H1 (cell line): ENCODE measurements at regions of chr1 and their contacts with region 1.

Region 1: DNA sequence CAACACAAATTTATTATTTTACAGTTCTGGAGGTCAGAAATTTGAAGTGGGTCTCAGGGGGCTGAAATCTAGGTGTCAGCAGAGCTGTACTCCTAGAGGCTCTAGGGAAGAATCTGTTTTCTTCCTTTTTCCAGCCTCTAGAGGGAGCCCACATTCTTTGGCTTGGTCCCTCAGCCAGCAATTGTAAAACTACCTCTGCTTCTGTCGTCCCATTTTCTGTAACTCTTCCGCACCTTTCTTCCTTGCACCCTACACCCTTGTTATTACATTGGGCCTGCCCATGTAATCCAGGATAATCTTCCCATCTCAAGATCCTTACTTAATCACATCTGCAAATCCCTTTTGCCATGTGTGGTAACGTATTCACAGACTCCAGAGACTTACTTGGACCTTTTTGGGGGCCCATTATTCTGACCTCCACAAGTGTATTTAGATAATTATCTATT is 24.8 kb upstream of the THEM4 start:
- DNase-seq: no peak
- H3K4me3 ChIP-seq: no peak overlapping the region
- H3K27ac ChIP-seq: no peak overlapping the region
- H3K4me1 ChIP-seq: no peaks in the 10 kb centered on the region
- H3K27me3 ChIP-seq: no peaks in the 10 kb centered on the region
- CTCF ChIP-seq: peak; percentile 16 to 90 (median 78)
- EP300 ChIP-seq: no peak
- POLR2A ChIP-seq: no peak
- RAD21 ChIP-seq: peak; percentile 94

Region 2: DNA sequence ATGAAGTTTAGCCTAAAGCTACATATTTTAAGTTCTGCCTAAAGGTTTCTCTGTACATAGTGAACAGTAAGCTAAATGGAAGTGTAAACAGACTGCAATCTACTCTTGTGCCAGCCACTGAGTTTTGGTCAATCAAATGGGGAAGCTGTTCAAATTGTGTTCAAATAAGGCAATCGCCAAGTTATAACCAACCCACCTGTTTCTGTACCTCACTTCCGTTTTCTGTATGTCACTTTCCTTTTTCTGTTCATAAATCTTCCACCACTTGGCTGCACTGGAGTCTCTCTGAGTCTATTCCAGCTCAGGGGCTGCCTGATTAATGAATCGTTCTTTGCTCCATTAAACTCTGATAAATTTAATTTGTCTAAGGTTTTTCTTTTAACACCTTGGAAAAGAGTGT is 13.9 kb before region 1 on chr1:
- CTCF ChIA-PET with region 1: interaction called, 24 read pairs
- POLR2A ChIA-PET with region 1: no interaction called
- DNase-seq: no peak
- H3K4me3 ChIP-seq: no peak overlapping the region
- H3K27ac ChIP-seq: no peak overlapping the region
- H3K4me1 ChIP-seq: no peaks in the 10 kb centered on the region
- H3K27me3 ChIP-seq: no peaks in the 10 kb centered on the region
- CTCF ChIP-seq: no peak
- EP300 ChIP-seq: no peak
- POLR2A ChIP-seq: no peak
- RAD21 ChIP-seq: no peak

Region 3: DNA sequence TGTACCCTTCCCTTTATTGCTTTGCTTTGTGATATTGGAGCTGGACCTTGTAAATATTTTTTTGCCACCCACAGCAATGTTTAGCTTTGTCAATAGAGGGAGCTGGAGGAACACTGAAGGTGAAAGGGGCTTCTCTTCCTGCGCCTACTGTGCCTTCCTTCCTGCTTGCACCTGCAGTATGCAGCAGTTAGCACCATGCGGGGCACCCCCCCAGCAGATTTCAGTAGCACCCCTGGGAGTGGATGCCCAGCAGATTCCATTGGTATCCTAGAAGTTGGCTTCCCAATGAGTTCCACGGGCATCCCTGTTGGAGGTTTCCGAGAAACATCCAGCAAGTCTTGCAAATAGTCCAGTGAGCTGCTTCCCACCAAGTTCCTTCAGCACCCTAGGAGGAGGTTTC is 34.0 kb after region 1 on chr1:
- CTCF ChIA-PET with region 1: interaction called, 113 read pairs
- POLR2A ChIA-PET with region 1: no interaction called
- DNase-seq: peak in 1 of 2 experiments; percentile 67
- H3K4me3 ChIP-seq: no peak overlapping the region
- H3K27ac ChIP-seq: no peak overlapping the region
- H3K4me1 ChIP-seq: peaks cover 0 to 11% (median 2%) of the 10 kb centered on the region in 4 experiments; a peak in 5 of 7 replicates
- H3K27me3 ChIP-seq: no peaks in the 10 kb centered on the region
- CTCF ChIP-seq: peak; percentile 38 to 86 (median 82)
- EP300 ChIP-seq: no peak
- POLR2A ChIP-seq: no peak
- RAD21 ChIP-seq: peak; percentile 93

Region 4: DNA sequence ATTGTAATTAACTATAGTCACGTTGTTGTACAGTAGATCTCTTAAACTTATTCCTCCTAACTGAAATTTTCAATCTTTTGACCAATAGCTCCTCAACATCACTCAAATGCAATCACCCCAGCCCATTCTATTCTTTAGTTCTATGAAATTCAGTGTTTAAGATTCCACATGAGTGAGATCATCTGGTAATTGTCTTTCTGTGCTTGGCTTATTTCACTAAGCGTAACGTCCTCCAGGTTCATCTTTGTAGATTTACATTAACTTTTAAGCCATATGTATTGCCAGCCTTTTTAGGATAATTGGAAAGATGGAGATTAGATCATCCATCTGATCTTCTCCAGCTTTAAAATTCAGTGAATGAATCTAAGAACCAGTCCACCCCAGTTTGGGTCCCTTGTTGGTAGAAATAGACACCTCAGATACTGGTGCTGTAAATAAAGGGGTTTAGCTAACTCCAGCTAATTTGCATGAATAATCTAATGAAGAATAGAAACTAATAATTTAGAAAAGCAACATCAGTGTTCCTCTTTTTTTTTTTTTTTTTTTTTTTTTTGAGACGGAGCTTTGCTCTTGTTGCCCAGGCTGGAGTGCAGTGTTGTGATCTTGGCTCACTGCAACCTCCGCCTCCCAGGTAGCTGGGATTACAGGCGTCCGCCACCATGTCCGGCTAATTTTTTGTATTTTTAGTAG is 52.6 kb after region 1 on chr1:
- CTCF ChIA-PET with region 1: interaction called, 24 read pairs
- POLR2A ChIA-PET with region 1: no interaction called
- DNase-seq: no peak
- H3K4me3 ChIP-seq: no peak overlapping the region; a peak in 1 of 8 replicates
- H3K27ac ChIP-seq: no peak overlapping the region
- H3K4me1 ChIP-seq: peaks cover 0 to 7% (median 2%) of the 10 kb centered on the region in 4 experiments; a peak in 5 of 7 replicates
- H3K27me3 ChIP-seq: no peaks in the 10 kb centered on the region
- CTCF ChIP-seq: no peak
- EP300 ChIP-seq: no peak
- POLR2A ChIP-seq: no peak
- RAD21 ChIP-seq: no peak

Region 5: GRCh38 chr1:152001391-152002249 is 67.5 kb after region 1 on chr1:
- CTCF ChIA-PET with region 1: interaction called, 180 read pairs
- POLR2A ChIA-PET with region 1: interaction called, 3 read pairs
- DNase-seq: peak in 1 of 2 experiments; percentile 88
- H3K4me3 ChIP-seq: no peak overlapping the region
- H3K27ac ChIP-seq: no peak overlapping the region
- H3K4me1 ChIP-seq: peaks cover 0 to 4% (median 0%) of the 10 kb centered on the region in 4 experiments; a peak in 1 of 7 replicates
- H3K27me3 ChIP-seq: no peaks in the 10 kb centered on the region
- CTCF ChIP-seq: peak; percentile 67 to 87 (median 85)
- EP300 ChIP-seq: no peak
- POLR2A ChIP-seq: no peak
- RAD21 ChIP-seq: peak; percentile 92 to 94